ENCODE measurements at regions of chr1 and their contacts with region 1.

Region 1: DNA sequence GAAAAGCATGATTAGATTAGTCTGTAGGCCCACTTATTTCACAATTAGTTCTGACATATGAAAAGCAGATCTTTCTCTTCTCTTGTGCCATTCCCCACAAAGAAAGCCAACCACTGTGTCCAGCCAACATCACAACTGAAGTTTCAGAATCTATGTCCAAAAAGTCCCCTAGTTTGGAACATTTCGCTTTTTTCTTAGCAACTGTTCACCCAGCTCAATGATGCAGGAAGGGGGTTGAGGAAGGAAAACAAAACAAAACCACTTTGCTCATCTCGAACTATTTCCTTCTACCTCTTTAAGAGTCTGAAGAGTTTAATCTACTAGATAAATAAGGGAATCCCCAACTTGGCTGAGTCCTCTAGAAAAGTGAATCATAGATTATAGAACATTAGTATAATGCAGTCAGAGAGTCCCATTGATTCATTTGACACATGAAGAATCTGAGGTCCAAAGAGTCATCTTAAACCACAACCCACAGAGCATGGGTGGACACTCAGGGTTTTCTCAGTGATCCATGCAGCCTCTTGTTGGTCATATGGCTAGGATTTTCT is 159.3 kb upstream of the SGIP1 start:
- DNase-seq: peak; percentile 61
- ATAC-seq: peak; percentile 70
- H3K4me3 Mint-ChIP-seq: peak overlapping the region; percentile 69
- H3K27ac Mint-ChIP-seq: peak overlapping the region; percentile 97
- H3K4me1 Mint-ChIP-seq: peaks cover 75% of the 10 kb centered on the region
- H3K27me3 Mint-ChIP-seq: no peaks in the 10 kb centered on the region

Region 2: DNA sequence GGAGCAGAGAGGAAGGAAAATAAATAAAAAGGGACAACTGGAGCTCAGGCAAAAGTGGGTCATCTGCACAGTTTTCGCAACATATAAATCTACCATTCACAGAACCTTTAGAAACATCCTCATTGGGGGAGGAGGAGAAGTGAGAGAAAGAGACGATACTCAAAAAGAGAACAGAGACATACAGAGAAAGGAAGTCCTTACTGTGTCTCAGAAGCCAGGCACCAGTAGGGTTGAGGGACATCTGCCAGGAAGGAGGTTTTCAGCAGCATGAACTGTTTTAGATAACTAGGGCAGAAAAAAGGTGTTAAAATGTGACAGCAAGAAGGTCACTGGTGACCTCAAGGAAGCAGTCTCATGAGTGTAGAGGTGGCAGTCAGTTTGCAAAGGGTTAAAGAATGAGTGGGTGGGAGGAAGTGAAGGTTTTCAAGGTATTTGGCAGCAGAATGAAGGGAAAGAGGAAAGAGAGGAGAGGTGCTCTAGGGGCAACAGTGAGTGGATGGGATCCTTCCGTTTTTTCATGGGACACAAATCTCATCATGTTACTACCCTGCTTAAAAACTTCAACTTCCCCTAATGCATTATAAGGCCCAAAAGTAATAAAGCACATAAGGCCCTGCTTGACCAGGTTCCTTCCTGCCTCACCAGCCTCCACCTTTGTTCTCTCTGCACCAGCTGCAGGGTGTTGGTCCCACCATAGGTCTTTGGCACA is 1417.7 kb before region 1 on chr1:
- CTCF ChIA-PET with region 1: no interaction called
- POLR2A ChIA-PET with region 1: no interaction called
- intact Hi-C with region 1: loop called in 1 of 2 experiments (anchors 5 kb)
- DNase-seq: peak; percentile 75
- ATAC-seq: peak; percentile 87
- H3K4me3 Mint-ChIP-seq: no peak overlapping the region
- H3K27ac Mint-ChIP-seq: no peak overlapping the region
- H3K4me1 Mint-ChIP-seq: peaks cover 61% of the 10 kb centered on the region
- H3K27me3 Mint-ChIP-seq: no peaks in the 10 kb centered on the region

Region 3: DNA sequence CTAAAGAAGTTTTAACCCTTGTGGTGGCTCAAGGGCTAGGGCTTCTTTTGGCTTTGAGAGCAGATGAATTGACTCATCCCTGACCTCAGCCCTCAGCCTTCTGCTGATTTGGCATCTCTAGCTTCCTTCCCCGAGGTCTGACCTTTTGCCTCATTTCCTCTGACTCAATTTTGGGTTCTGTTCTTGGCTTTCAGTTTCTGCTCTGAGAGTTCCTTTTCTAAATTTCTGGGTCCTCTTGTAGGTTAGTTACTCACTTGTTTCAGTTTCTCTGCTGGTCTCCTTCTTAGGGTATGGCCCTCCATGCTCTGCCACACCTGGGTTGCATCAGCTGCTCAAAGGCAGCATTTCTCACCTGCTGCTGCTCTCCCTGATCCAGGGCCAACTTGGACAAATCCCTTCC is 562.6 kb before region 1 on chr1:
- CTCF ChIA-PET with region 1: no interaction called
- POLR2A ChIA-PET with region 1: no interaction called
- intact Hi-C with region 1: loop called in 1 of 2 experiments (anchors 1 kb)
- DNase-seq: peak; percentile 81
- ATAC-seq: peak; percentile 98
- H3K4me3 Mint-ChIP-seq: peak overlapping the region; percentile 11
- H3K27ac Mint-ChIP-seq: peak overlapping the region; percentile 74
- H3K4me1 Mint-ChIP-seq: peaks cover 24% of the 10 kb centered on the region
- H3K27me3 Mint-ChIP-seq: peaks cover 36% of the 10 kb centered on the region

Region 4: DNA sequence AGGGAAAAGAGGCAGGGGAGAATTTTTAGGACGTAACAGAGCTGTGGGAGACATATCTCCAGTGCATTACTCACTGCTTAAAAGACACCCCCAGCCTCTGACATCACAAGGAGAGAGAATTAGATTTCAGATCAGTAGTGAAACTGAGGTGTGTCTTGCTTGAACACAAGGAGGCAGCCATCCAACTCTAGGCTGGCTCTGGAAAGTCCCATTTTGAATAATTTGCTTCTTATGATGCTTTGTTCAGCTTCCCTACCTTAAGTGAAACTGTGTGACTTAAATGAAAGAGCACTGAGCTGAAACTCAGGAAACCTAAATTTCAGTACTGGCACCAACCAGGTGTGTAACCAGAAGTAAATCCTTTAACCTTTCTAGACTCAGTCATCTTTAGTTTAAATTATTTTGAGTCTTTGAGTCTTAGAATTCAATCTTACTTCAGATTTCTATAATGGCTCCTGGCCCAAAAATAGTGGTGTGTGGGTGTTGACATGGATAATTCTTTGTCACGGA is 92.2 kb before region 1 on chr1:
- CTCF ChIA-PET with region 1: interaction called, 4 read pairs
- POLR2A ChIA-PET with region 1: interaction called, 8 read pairs
- intact Hi-C with region 1: loop called (anchors 1 kb)
- DNase-seq: peak; percentile 82
- ATAC-seq: peak; percentile 80
- H3K4me3 Mint-ChIP-seq: peak overlapping the region; percentile 29
- H3K27ac Mint-ChIP-seq: peak overlapping the region; percentile 90
- H3K4me1 Mint-ChIP-seq: peaks cover 93% of the 10 kb centered on the region
- H3K27me3 Mint-ChIP-seq: no peaks in the 10 kb centered on the region

Region 5: DNA sequence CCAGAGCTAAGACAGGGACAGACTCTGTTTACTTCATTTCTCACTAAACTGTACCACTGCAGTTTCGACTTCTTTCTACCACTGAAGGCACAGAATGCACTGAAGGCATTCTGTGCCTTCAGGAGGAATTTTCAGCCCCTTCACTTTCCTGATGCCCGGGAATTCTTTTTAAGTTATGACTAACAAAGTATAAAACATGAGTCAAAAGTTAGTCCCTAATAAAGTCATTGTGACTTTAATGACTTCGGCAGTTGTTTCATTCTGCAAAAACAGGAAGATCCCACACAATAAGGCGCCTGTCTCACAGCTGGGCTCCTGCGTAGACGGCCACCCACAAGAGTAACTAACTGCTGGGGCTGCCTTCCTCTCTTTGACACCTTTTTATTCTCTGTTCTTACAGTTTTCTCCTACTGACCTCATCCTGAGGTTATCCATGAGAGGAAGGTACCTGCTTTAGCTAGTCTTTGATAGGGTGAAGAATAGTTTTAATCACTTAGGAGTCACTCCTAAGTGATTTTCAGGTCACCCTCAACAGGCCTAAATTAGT is 24.6 kb before region 1 on chr1:
- CTCF ChIA-PET with region 1: interaction called, 109 read pairs
- POLR2A ChIA-PET with region 1: interaction called, 60 read pairs
- intact Hi-C with region 1: loop called (anchors 1 kb)
- DNase-seq: peak; percentile 78
- ATAC-seq: peak; percentile 59
- H3K4me3 Mint-ChIP-seq: peak overlapping the region; percentile 57
- H3K27ac Mint-ChIP-seq: peak overlapping the region; percentile 88
- H3K4me1 Mint-ChIP-seq: peaks cover 93% of the 10 kb centered on the region
- H3K27me3 Mint-ChIP-seq: no peaks in the 10 kb centered on the region

Region 6: GRCh38 chr1:66436378-66437145 is 61.9 kb after region 1 on chr1:
- CTCF ChIA-PET with region 1: interaction called, 26 read pairs
- POLR2A ChIA-PET with region 1: interaction called, 7 read pairs
- intact Hi-C with region 1: loop called (anchors 1 kb)
- DNase-seq: peak; percentile 77
- ATAC-seq: peak; percentile 97
- H3K4me3 Mint-ChIP-seq: no peak overlapping the region
- H3K27ac Mint-ChIP-seq: peak overlapping the region; percentile 58
- H3K4me1 Mint-ChIP-seq: peaks cover 39% of the 10 kb centered on the region
- H3K27me3 Mint-ChIP-seq: no peaks in the 10 kb centered on the region

Region 7: DNA sequence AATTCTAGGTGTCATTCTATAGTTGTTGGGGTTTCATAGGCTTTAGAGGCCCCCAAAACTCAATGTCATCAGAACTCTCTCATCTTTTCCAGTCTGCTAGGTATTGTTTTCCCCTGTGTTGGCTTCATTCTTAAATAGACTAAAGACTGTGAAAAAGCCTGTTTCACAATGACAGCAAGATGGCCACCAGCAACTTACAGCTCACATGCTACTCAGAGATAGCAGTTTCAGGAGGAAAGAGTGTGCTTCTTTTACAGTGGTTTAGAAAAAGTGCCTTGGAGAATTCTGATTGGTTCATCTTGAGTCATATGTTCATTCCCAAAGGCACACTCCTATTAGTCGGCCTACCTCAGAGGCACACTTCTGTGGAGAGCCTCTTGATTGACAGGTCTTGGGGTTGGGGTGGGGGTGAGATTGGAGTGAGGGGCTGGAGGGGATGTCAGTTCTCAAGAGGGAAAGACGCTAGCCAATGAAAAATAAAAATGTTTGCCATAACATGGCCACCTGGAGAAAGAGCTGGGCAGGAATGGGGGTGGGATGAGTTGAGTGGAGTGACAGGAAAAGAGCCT is 800.2 kb after region 1 on chr1:
- CTCF ChIA-PET with region 1: no interaction called
- POLR2A ChIA-PET with region 1: no interaction called
- intact Hi-C with region 1: loop called (anchors 5 to 10 kb)
- DNase-seq: peak; percentile 61
- ATAC-seq: peak; percentile 70
- H3K4me3 Mint-ChIP-seq: peak overlapping the region; percentile 25
- H3K27ac Mint-ChIP-seq: peak overlapping the region; percentile 94
- H3K4me1 Mint-ChIP-seq: peaks cover 68% of the 10 kb centered on the region
- H3K27me3 Mint-ChIP-seq: no peaks in the 10 kb centered on the region

Measured in activated CD4-positive, alpha-beta T cell treated with anti-CD3 and anti-CD28 coated beads for 36 hours (primary cell).